HepG2 (cell line): ENCODE measurements at regions of chr4 and their contacts with region 1.

Region 1: DNA sequence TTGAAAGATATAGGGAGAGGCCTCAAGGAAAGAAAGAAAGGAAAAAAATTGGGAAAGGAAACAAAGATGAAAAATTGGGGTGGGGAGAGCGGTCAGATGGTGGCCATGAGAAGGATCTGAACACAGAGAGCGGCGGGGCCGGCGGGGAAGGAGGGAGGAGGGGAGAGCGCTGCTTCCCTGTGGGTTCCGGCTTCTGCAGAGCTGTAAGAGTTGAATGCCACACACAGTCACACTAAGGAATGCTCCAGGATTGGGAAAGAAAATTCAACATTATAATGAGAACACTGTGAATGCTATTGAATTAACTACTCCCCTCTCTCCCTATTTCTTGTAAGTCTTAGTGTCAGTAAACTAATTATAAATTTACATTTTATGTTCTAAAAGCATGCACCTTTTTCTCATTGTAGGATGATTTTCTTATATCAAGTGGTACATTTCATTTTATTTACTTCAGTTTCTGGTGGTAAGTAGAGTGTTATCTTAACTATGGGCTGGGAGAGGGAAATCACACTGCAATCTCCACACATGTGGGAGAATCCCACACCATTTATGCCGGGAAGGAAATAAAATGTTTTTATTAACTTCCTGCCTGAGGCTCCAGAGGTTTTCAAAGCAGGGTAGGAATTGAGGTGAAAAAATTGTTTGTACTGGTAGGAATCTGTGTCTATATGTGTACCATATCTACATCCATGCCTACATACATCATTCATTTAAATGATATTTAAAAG is 904 bp downstream of the F11 start:
- DNase-seq: peak; percentile 58
- ATAC-seq: peak; percentile 97
- H3K4me3 ChIP-seq: peak overlapping the region; percentile 64 to 86 (median 69)
- H3K27ac ChIP-seq: peak overlapping the region; percentile 85
- H3K4me1 ChIP-seq: peaks cover 48% of the 10 kb centered on the region
- H3K27me3 ChIP-seq: no peaks in the 10 kb centered on the region
- CTCF ChIP-seq: peak; percentile 3; the same call in 1 of the 2 replicates
- EP300 ChIP-seq: no peak
- POLR2A ChIP-seq: peak; percentile 43 to 59; a peak in 2 of 4 replicates
- RAD21 ChIP-seq: no peak

Region 2: GRCh38 chr4:186291256-186291890 is 24.5 kb after region 1 on chr4:
- CTCF ChIA-PET with region 1: no interaction called
- POLR2A ChIA-PET with region 1: interaction called, 10 read pairs
- in situ Hi-C with region 1: no loop called
- intact Hi-C with region 1: no loop called
- DNase-seq: no peak
- ATAC-seq: peak; percentile 24; the same call in 2 of the 3 replicates
- H3K4me3 ChIP-seq: no peak overlapping the region
- H3K27ac ChIP-seq: no peak overlapping the region
- H3K4me1 ChIP-seq: peaks cover 3% of the 10 kb centered on the region; the same call in 1 of the 2 replicates
- H3K27me3 ChIP-seq: no peaks in the 10 kb centered on the region
- CTCF ChIP-seq: no peak
- EP300 ChIP-seq: no peak
- POLR2A ChIP-seq: no peak
- RAD21 ChIP-seq: no peak